HAP-1 (cell line): ENCODE measurements at regions of chr17 and their contacts with region 1.

Region 1: GRCh38 chr17:63406689-63407330 is 39.3 kb downstream of the CYB561 start:
- DNase-seq: peak; percentile 83 to 87
- H3K4me3 ChIP-seq: no peak overlapping the region
- H3K4me1 ChIP-seq: peaks cover 9% of the 10 kb centered on the region; the same call in 1 of the 2 replicates
- H3K27me3 ChIP-seq: no peaks in the 10 kb centered on the region

Region 2: GRCh38 chr17:62703775-62704378 is 702.9 kb before region 1 on chr17:
- in situ Hi-C with region 1: loop called (anchors 10 kb)
- DNase-seq: peak; percentile 45 to 86
- H3K4me3 ChIP-seq: peak overlapping the region; percentile 42
- H3K4me1 ChIP-seq: peaks cover 13% of the 10 kb centered on the region; the same call in 1 of the 2 replicates
- H3K27me3 ChIP-seq: no peaks in the 10 kb centered on the region

Region 3: DNA sequence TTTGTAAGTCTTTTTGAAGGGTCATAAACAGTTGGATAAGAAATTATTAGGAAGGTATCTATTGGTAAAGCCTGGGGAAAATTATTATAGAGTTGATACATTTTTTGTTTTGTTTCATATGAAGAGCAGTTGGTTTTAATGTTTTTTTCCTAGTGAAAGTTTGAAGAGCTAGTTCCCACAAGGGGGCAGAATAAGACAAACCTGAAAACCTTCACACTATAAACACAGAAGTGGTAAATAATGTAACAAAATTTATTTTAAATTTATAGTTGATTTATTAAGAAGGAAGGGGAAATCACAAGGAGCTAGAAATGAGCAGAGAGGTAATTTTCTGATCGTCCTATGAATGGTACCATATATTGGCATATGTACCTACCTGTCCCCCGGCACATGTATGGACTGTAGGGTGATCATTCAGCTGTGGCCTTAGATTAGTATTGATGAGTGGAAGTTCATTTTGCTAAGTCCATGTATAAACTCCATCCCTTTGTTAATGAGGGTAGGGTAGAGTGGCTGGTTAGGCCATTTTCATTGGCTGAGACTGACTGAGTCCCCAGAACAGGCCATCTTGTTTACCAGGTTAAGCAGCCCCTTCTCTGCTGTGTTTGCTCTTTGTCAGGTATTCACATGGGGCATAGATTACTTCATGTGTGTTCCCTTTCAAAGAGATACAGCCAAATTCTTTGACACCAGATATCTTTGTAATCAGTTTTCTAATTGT is 324.4 kb before region 1 on chr17:
- in situ Hi-C with region 1: loop called (anchors 25 kb)
- DNase-seq: peak in 1 of 2 experiments; percentile 42
- H3K4me3 ChIP-seq: no peak overlapping the region
- H3K4me1 ChIP-seq: peaks cover 7% of the 10 kb centered on the region
- H3K27me3 ChIP-seq: no peaks in the 10 kb centered on the region

Region 4: DNA sequence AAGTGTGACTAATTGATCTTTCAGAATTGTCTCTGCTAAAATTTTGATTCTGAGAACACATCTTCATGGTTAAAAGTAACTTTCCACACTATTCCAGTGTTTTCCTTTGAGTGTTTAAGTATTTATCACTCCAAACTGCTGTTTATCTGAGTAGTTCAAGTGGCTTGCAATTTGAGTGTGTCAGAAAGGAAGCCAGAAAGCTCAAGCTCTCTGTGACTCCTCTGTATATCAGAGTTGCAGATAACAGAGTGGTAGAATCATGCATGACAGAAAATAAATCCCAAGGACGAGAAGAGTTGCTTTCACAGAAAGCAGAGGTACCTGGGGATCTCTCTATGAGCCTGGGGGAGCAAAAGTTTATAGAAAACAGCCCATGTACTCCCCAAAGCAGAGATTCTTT is 90.7 kb before region 1 on chr17:
- in situ Hi-C with region 1: no loop called
- DNase-seq: no peak
- H3K4me3 ChIP-seq: no peak overlapping the region
- H3K4me1 ChIP-seq: no peaks in the 10 kb centered on the region
- H3K27me3 ChIP-seq: no peaks in the 10 kb centered on the region

Region 5: GRCh38 chr17:63480826-63481487 is 74.1 kb after region 1 on chr17:
- in situ Hi-C with region 1: no loop called
- DNase-seq: no peak
- H3K4me3 ChIP-seq: no peak overlapping the region
- H3K4me1 ChIP-seq: peaks cover 15% of the 10 kb centered on the region
- H3K27me3 ChIP-seq: no peaks in the 10 kb centered on the region